GM23248 (cell line): ENCODE measurements at regions of chr5 and their contacts with region 1.

Region 1: GRCh38 chr5:154060606-154061005 is 21.8 kb downstream of the MFAP3 start:
- DNase-seq: no peak
- H3K4me3 ChIP-seq: no peak overlapping the region
- H3K27ac ChIP-seq: no peak overlapping the region
- H3K4me1 ChIP-seq: no peaks in the 10 kb centered on the region
- H3K27me3 ChIP-seq: no peaks in the 10 kb centered on the region

Region 2: GRCh38 chr5:154190595-154191304 is 130.1 kb after region 1 on chr5 and contains the start of gene GALNT10:
- in situ Hi-C with region 1: no loop called
- DNase-seq: peak; percentile 90
- H3K4me3 ChIP-seq: peak within 1 kb of the TSS; percentile 88
- H3K27ac ChIP-seq: peak within 1 kb of the TSS; percentile 47
- H3K4me1 ChIP-seq: peaks cover 37% of the 10 kb centered on the region
- H3K27me3 ChIP-seq: no peaks in the 10 kb centered on the region
- total RNA-seq, gene GALNT10: 65.4 and 67.9 TPM in 2 replicates

Region 3: GRCh38 chr5:154418344-154418820 is 357.8 kb after region 1 on chr5:
- in situ Hi-C with region 1: loop called (anchors 10 kb)
- DNase-seq: no peak
- H3K4me3 ChIP-seq: no peak overlapping the region
- H3K27ac ChIP-seq: no peak overlapping the region
- H3K4me1 ChIP-seq: no peaks in the 10 kb centered on the region
- H3K27me3 ChIP-seq: no peaks in the 10 kb centered on the region